SK-N-SH (cell line): ENCODE measurements at regions of chr2 and their contacts with region 1.

Region 1: GRCh38 chr2:16608661-16609643 is 56.7 kb downstream of the CYRIA start:
- DNase-seq: peak; percentile 89
- H3K4me3 ChIP-seq: peak overlapping the region; percentile 59 to 86
- H3K27ac ChIP-seq: peak overlapping the region in 1 of 2 experiments; percentile 79; a peak in 2 of 4 replicates
- H3K4me1 ChIP-seq: peaks cover 4 to 5% of the 10 kb centered on the region in 2 experiments; a peak in 2 of 4 replicates
- H3K27me3 ChIP-seq: no peaks in the 10 kb centered on the region
- CTCF ChIP-seq: peak; percentile 89
- EP300 ChIP-seq: no peak; a peak in 1 of 4 replicates
- RAD21 ChIP-seq: peak; percentile 91

Region 2: DNA sequence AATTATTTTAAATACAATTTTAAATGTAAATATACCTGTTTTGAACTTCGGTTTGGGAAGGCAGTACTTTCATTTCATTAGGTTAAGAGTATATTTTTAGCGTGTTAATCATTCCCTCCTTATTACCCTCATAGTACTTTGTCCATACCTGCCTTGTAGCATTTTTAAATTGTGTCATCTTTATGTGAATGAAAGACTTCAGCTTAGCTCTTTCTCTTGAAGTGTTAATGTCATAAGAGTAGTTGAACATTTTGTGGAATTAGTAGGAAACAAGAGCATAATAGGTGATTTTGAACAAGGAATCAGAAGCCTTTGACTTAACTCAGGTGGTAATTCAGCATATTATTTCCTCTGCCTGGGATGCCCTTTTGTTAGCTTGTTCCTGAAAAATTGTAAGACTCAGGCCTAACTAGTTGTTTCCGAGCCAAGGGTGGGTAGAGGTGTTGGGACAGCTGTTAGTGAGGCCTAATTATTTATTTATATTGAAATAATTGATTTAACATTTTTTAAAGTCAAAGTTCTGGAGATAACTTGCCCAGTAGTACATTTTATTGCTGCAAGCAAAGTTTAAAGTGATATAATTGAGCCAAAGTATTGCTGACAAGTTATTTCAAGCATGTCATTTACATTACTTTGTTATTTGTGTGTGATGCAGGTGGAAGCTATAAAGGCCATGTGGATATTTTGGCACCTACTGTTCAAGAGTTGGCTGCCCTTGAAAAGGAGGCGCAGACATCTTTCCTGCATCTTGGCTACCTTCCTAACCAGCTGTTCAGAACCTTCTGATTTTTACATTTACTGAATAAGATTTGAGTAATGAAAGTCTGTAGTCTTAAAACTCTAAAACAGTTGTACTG is 978.6 kb before region 1 on chr2:
- CTCF ChIA-PET with region 1: interaction called, 29 read pairs
- POLR2A ChIA-PET with region 1: no interaction called
- DNase-seq: no peak
- H3K4me3 ChIP-seq: no peak overlapping the region
- H3K27ac ChIP-seq: no peak overlapping the region; a peak in 1 of 4 replicates
- H3K4me1 ChIP-seq: peaks cover 0 to 8% of the 10 kb centered on the region in 2 experiments; a peak in 1 of 4 replicates
- H3K27me3 ChIP-seq: no peaks in the 10 kb centered on the region
- CTCF ChIP-seq: no peak
- EP300 ChIP-seq: no peak
- RAD21 ChIP-seq: no peak

Region 3: DNA sequence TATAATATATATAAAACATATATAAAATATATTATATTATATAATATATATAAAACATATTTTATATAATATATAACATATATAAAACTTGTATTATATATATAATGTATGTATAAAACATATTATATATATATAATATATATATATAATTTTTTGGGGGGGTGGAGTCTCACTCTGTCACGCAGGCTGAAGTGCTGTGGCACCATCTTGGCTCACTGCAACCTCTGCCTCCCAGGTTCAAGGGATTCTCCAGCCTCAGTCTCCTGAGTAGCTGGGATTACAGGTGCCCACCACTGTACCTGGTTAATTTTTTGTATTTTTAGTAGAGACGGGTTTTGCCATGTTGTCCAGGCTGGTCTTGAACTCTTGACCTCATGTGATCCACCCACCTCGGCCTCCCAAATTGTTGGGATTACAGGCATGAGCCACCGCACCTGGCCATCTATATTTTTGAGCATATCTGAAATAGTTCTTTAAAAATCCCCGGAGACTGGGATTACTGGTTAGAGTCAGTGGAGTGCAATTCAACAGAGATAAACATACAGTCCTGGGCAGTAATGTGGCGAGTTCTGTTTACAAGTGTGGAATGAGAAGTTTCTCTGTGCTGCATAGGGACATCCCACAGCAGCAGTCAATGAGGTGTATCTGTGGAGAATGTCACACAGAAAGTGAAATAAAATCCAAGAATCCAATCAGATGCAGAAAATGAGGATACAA is 460.2 kb before region 1 on chr2:
- CTCF ChIA-PET with region 1: no interaction called
- POLR2A ChIA-PET with region 1: no interaction called
- DNase-seq: no peak
- H3K4me3 ChIP-seq: no peak overlapping the region
- H3K27ac ChIP-seq: no peak overlapping the region
- H3K4me1 ChIP-seq: no peaks in the 10 kb centered on the region
- H3K27me3 ChIP-seq: no peaks in the 10 kb centered on the region
- CTCF ChIP-seq: no peak
- EP300 ChIP-seq: no peak
- RAD21 ChIP-seq: no peak

Region 4: GRCh38 chr2:16507655-16508489 is 101.1 kb before region 1 on chr2:
- CTCF ChIA-PET with region 1: interaction called, 56 read pairs
- POLR2A ChIA-PET with region 1: no interaction called
- DNase-seq: peak; percentile 96
- H3K4me3 ChIP-seq: peak overlapping the region in 1 of 2 experiments; percentile 44; a peak in 3 of 4 replicates
- H3K27ac ChIP-seq: no peak overlapping the region; a peak in 1 of 4 replicates
- H3K4me1 ChIP-seq: peaks cover 0 to 23% of the 10 kb centered on the region in 2 experiments; a peak in 1 of 4 replicates
- H3K27me3 ChIP-seq: no peaks in the 10 kb centered on the region
- CTCF ChIP-seq: peak; percentile 35
- EP300 ChIP-seq: no peak
- RAD21 ChIP-seq: peak; percentile 93

Region 5: GRCh38 chr2:16553226-16553625 is 55.7 kb before region 1 on chr2:
- CTCF ChIA-PET with region 1: interaction called, 26 read pairs
- POLR2A ChIA-PET with region 1: no interaction called
- DNase-seq: peak; percentile 28
- H3K4me3 ChIP-seq: no peak overlapping the region; a peak in 1 of 4 replicates
- H3K27ac ChIP-seq: no peak overlapping the region
- H3K4me1 ChIP-seq: no peaks in the 10 kb centered on the region
- H3K27me3 ChIP-seq: no peaks in the 10 kb centered on the region
- CTCF ChIP-seq: peak; percentile 58
- EP300 ChIP-seq: no peak
- RAD21 ChIP-seq: peak; percentile 62

Region 6: DNA sequence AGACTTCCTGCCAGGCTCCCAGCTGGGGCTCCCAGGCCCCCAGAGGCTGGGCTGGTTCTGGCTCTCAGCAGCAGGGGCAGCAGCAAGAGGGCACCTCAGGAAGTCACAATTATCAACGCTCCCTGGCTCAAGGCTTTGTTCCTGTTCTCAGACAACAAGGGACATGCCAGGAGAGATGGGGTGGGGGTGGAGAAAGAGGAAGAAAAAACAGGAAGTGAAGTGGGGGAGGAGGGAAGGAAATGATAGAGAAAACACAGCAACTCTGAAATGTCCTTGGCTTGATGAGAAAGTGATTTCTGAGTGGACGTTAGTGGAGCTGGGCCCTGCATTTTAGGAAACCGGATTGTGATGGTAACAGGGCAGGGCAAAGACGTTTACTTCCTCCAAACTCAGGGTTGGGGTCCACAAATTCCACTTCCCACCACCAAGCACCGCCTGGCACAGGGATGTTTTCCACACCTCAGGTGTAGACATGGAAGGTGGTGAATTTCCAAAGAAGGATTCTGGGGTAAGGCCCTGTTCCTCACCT is 16.3 kb after region 1 on chr2:
- CTCF ChIA-PET with region 1: interaction called, 35 read pairs
- POLR2A ChIA-PET with region 1: no interaction called
- DNase-seq: no peak
- H3K4me3 ChIP-seq: no peak overlapping the region
- H3K27ac ChIP-seq: no peak overlapping the region
- H3K4me1 ChIP-seq: peaks cover 4 to 9% of the 10 kb centered on the region in 2 experiments; a peak in 2 of 4 replicates
- H3K27me3 ChIP-seq: no peaks in the 10 kb centered on the region
- CTCF ChIP-seq: no peak
- EP300 ChIP-seq: no peak
- RAD21 ChIP-seq: no peak

Region 7: DNA sequence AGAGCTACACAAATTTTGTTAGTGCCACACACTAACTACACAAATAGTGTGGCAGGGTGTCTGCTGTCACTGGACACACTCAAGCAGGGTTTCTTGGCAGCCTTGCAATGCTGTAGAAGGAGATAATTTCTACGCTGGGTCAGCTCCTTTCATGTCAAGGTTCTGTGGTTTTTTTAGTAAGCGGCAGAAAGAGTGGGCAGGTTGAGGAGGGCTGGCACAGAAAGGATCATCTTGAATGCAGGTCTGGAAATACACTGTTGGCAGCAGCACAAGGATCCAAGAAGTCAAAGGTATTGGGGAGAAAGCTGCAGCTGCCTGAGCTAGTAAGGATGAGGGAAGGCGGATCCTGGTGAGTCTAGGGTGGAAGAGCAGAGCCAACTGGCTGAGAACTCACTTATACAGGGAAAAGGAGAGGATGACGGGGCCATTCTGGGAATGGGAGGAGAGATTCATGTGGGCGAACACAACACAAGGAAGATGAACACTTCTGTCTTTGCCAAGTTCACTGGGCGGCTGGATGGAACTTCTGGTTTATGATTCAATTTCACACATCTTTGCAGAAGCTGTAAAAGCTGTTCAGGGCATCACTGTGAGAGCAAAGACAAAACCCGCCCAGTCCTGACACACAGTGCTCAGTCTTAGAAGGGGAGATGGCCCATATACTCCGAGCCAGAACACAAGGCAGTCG is 73.6 kb after region 1 on chr2:
- CTCF ChIA-PET with region 1: interaction called, 11 read pairs
- POLR2A ChIA-PET with region 1: no interaction called
- DNase-seq: no peak
- H3K4me3 ChIP-seq: no peak overlapping the region
- H3K27ac ChIP-seq: no peak overlapping the region
- H3K4me1 ChIP-seq: peaks cover 0 to 15% of the 10 kb centered on the region in 2 experiments; a peak in 2 of 4 replicates
- H3K27me3 ChIP-seq: no peaks in the 10 kb centered on the region
- CTCF ChIP-seq: no peak
- EP300 ChIP-seq: no peak
- RAD21 ChIP-seq: no peak

Region 8: GRCh38 chr2:16756831-16757644 is 148.1 kb after region 1 on chr2:
- CTCF ChIA-PET with region 1: interaction called, 341 read pairs
- POLR2A ChIA-PET with region 1: interaction called, 12 read pairs
- DNase-seq: peak; percentile 79
- H3K4me3 ChIP-seq: peak overlapping the region in 1 of 2 experiments; percentile 27; a peak in 1 of 4 replicates
- H3K27ac ChIP-seq: no peak overlapping the region
- H3K4me1 ChIP-seq: peaks cover 0 to 4% of the 10 kb centered on the region in 2 experiments; a peak in 1 of 4 replicates
- H3K27me3 ChIP-seq: no peaks in the 10 kb centered on the region
- CTCF ChIP-seq: peak; percentile 95
- EP300 ChIP-seq: no peak
- RAD21 ChIP-seq: peak; percentile 99

Region 9: DNA sequence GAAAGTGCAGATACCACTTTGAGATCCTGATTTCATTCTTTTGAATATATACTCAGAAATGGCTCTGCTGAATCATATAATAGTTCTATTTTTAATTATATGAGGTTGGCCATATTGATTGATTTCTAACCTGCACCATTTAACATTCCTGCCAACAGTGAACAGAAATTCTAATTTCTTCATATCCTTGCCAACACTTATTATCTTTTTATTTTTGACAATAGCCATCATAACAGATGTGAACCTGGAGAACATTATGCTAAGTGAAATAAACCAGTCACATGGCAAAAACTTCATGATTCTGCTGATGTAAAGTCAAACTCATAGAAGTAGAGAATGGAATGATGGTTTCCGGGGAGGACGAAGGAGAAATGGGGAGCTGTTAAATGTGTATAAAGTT is 401.2 kb after region 1 on chr2:
- CTCF ChIA-PET with region 1: no interaction called
- POLR2A ChIA-PET with region 1: no interaction called
- DNase-seq: no peak
- H3K4me3 ChIP-seq: no peak overlapping the region
- H3K27ac ChIP-seq: no peak overlapping the region
- H3K4me1 ChIP-seq: peaks cover 0 to 13% of the 10 kb centered on the region in 2 experiments; a peak in 2 of 4 replicates
- H3K27me3 ChIP-seq: no peaks in the 10 kb centered on the region
- CTCF ChIP-seq: no peak
- EP300 ChIP-seq: peak in 1 of 2 experiments; percentile 89; a peak in 2 of 4 replicates
- RAD21 ChIP-seq: no peak